ENCODE measurements at regions of chr20 and their contacts with region 1.

Region 1: GRCh38 chr20:51306503-51307358 is 235.8 kb downstream of the NFATC2 start:
- DNase-seq: peak; percentile 90
- H3K4me3 ChIP-seq: peak overlapping the region in 1 of 2 experiments; percentile 35; a peak in 1 of 4 replicates
- H3K27ac ChIP-seq: peak overlapping the region in 1 of 2 experiments; percentile 22; a peak in 1 of 4 replicates
- H3K4me1 ChIP-seq: peaks cover 0 to 13% of the 10 kb centered on the region in 2 experiments; a peak in 1 of 4 replicates
- H3K27me3 ChIP-seq: no peaks in the 10 kb centered on the region
- CTCF ChIP-seq: peak; percentile 88
- EP300 ChIP-seq: no peak
- RAD21 ChIP-seq: peak; percentile 98

Region 2: GRCh38 chr20:50992733-50993457 is 313.8 kb before region 1 on chr20:
- CTCF ChIA-PET with region 1: interaction called, 452 read pairs
- POLR2A ChIA-PET with region 1: interaction called, 4 read pairs
- DNase-seq: peak; percentile 83
- H3K4me3 ChIP-seq: no peak overlapping the region; a peak in 1 of 4 replicates
- H3K27ac ChIP-seq: no peak overlapping the region
- H3K4me1 ChIP-seq: no peaks in the 10 kb centered on the region
- H3K27me3 ChIP-seq: no peaks in the 10 kb centered on the region
- CTCF ChIP-seq: peak; percentile 67
- EP300 ChIP-seq: no peak
- RAD21 ChIP-seq: peak; percentile 79

Region 3: DNA sequence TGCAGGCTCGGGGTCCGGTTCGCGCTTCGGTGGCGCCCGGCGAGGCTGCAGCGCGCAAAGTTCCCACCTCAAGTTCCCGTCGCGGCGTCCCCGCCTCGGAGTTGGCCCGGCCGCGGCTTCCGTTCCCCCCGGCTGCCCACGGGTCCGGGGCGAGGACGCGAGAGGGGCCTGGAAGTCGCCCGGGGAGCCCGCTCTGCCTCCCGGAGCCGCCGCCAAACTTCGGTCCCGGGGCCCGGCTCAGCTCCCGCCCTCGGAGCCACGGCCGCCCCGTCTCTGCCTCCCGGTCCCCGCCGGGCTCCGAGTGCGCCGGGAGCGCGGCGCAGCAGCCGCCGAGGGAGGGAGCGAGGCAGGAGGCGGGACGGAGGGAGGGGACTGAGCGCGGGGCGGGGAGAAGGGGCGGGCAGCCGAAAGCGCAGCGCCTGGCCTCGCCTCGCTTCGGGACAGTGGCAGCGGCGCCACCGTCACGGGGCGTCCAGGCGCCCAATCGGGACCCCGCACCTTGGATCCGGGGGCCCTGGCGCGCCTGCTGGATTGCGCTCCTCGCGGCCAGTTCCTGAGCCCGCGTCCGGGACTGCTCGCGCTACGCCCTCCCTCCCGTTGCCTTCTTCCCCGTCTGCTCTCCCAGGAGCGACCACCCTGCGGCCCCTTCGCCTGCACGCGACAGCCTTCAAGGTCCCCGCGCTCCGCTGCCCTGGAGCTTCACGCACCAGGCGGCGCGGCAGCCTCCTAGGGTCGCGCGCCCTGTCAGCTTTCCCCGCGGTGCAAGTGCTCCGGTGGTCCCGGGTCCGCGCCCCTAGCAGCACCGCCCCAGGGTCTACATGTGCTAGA is 283.7 kb before region 1 on chr20 and contains the start of gene KCNG1:
- CTCF ChIA-PET with region 1: interaction called, 36 read pairs
- POLR2A ChIA-PET with region 1: interaction called, 3 read pairs
- DNase-seq: peak; percentile 97
- H3K4me3 ChIP-seq: peak within 1 kb of the TSS; percentile 66 to 82
- H3K27ac ChIP-seq: peak within 1 kb of the TSS in 1 of 2 experiments; percentile 60; a peak in 1 of 4 replicates
- H3K4me1 ChIP-seq: peaks cover 14 to 43% of the 10 kb centered on the region in 2 experiments; a peak in 2 of 4 replicates
- H3K27me3 ChIP-seq: no peaks in the 10 kb centered on the region; the same call in 1 of the 2 replicates
- CTCF ChIP-seq: no peak
- EP300 ChIP-seq: no peak
- RAD21 ChIP-seq: no peak
- polyA plus RNA-seq, gene KCNG1: 11.2 and 13.8 TPM in 2 replicates

Region 4: GRCh38 chr20:51156041-51156982 is 150.4 kb before region 1 on chr20:
- CTCF ChIA-PET with region 1: interaction called, 16 read pairs
- POLR2A ChIA-PET with region 1: interaction called, 6 read pairs
- DNase-seq: peak; percentile 77
- H3K4me3 ChIP-seq: no peak overlapping the region
- H3K27ac ChIP-seq: peak overlapping the region in 1 of 2 experiments; percentile 99; a peak in 2 of 4 replicates
- H3K4me1 ChIP-seq: peaks cover 0 to 47% of the 10 kb centered on the region in 2 experiments; a peak in 2 of 4 replicates
- H3K27me3 ChIP-seq: peaks cover 44% of the 10 kb centered on the region
- CTCF ChIP-seq: no peak
- EP300 ChIP-seq: peak in 1 of 2 experiments; percentile 99; a peak in 2 of 4 replicates
- RAD21 ChIP-seq: peak; percentile 35; the same call in 1 of the 2 replicates

Region 5: DNA sequence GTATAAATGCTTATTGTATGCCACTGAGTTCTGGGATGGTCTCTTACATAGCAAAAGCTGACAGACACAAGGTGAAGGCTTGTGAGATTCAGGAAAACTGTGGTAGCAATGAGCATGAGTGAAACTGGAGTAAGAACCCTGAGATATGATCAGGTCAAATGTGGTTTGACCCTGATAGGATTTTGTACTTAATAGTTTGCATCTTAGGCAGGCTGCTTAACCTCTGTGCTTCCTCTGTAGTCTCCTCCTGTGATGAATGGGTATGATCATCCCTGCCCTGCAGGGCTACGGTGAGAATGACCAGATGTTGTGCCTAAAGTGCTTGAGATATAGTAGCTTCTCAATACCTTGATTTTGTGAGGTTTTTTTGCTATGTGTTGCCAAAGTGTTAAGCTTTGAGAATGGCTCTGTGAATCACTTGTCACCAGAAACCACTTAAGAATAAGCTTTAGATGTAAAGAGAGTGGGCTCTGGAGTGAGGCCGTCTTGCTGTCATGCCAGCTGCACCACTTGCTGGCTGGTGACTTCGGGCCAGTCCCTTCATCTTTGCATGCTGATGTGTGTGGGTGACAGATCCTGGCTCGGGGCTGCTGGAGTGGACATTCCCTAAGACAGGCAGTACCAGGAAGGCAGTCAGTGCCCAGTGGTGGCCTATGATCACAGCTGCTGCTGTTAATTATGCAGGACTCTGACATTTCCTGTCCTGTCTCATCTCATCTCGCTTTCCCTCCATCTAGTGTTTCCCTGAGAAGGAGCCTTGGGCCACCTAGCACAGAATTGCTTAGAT is 18.9 kb before region 1 on chr20:
- CTCF ChIA-PET with region 1: interaction called, 13 read pairs
- POLR2A ChIA-PET with region 1: no interaction called
- DNase-seq: peak; percentile 36
- H3K4me3 ChIP-seq: no peak overlapping the region
- H3K27ac ChIP-seq: no peak overlapping the region; a peak in 1 of 4 replicates
- H3K4me1 ChIP-seq: peaks cover 0 to 19% of the 10 kb centered on the region in 2 experiments; a peak in 1 of 4 replicates
- H3K27me3 ChIP-seq: 0 out of 2 replicates have a peak, but pooled peaks cover 4% of the 10 kb centered on the region
- CTCF ChIP-seq: no peak
- EP300 ChIP-seq: no peak
- RAD21 ChIP-seq: no peak

Region 6: DNA sequence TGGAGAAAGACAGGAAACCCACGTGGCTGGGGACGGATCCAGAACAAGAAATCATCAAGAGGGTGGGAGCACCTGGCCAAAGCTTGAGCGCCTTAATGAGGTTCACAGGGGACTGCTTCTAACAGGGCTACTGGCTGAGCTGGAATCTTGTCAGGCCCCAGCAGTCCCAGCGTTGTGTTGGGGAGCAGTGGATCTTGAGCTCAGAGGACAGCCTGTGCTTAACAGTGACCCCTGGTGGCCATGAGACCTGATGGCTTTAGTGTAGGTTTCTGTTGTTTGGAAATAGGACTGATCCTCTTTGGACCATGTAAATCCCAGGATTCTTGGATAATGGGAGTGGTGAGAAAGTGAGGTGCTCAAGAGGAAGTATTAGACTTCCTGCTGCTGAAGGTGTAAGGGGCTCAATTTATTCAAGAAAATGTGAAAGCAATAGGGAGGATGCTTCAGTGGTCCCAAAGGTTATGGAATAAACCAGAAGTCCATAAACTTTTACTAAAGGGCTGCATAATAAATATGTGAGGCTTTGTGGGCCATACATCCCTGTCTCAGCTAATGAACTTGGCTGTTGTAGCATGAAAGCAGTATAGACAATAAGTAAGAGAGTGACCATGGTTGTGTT is 19.6 kb after region 1 on chr20:
- CTCF ChIA-PET with region 1: interaction called, 79 read pairs
- POLR2A ChIA-PET with region 1: no interaction called
- DNase-seq: peak; percentile 52
- H3K4me3 ChIP-seq: no peak overlapping the region
- H3K27ac ChIP-seq: peak overlapping the region in 1 of 2 experiments; percentile 98; a peak in 2 of 4 replicates
- H3K4me1 ChIP-seq: 0 out of 4 replicates have a peak, but pooled peaks cover 0 to 3% of the 10 kb centered on the region in 2 experiments
- H3K27me3 ChIP-seq: no peaks in the 10 kb centered on the region
- CTCF ChIP-seq: peak; percentile 52
- EP300 ChIP-seq: no peak
- RAD21 ChIP-seq: peak; percentile 51

Measured in SK-N-SH (cell line).